ENCODE measurements at regions of chr11 and their contacts with region 1.

Region 1: DNA sequence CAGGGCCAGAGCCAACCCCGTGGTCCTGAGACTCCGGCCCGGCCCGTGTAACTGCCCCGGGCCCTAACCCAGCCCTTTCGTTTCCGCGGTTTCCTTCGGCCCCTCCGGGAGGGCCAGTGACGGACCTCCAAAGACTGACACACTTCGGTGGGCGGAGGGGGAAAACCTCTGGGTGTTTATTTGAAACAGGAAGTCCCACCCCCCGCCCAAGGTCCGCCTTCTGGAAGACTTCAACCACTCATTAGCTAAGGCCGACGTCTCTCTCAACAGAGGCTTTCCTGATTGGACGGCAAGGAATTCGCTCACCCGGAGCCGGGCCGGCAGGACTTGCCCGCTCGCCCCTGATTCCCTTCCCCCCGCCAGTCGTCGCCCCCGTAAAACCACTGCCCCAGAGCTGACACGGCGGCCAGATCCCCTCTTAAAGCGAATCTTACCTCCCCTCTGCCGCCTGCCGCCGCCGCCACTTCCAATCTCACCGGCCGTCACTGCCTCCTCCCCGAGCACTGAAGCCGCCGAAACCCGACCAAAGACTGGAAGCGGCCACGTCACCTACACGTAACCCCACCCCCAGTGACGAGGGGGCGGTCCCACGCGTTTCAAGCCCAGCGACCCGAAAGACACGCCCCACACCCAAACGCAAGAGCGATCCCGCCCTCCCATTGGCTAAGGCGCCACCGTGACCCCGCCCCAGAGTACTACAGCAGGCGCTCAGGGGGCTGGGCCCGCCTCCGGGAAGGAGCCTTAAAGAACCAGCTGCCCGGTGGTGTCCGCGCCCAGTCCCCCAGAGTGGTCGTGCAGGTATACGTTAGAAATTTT is at the start of gene STX5:
- DNase-seq: peak; percentile 98
- CTCF ChIP-seq: no peak

Region 2: DNA sequence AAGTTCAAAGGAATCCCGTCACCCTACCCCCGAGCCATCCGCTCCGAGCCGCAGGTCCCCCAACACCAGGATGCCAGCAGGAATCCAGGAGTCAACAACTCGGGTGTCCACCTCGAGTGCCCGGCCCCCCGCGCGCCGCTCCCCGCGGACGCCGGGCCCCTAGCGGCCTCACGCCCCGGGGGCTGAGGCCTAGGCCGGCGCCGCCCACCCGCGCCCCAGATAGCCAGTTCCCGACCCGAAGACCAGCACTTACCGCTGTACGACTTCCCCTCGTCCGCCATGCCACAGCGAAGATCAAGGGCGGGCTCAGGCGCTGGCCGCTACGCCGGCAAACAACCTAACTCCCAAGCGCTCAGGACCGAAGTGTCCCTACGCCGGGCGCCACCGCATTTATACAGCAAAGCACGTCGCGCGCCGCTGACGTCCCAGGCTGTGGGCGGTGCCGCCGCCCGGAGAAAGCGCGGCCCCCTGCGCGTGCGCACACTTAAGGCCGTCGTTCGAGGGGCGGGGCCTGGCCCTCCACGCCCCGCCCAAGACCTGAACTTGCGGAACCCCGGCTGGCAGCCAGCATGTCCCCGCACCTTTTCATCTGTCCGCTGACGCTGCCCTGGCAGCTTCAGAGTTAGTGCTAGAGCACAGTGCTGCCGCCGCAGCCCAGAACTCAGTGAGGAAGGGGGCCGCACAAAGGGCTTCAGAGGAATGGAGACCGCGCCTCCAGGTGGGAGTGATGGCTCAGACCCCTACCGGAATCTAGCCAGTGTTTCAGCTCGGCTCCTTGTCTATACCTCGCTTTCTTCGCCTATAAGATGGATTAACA is 26.4 kb before region 1 on chr11 and contains the start of gene NXF1:
- CTCF ChIA-PET with region 1: interaction called, 6 read pairs
- POLR2A ChIA-PET with region 1: interaction called, 14 read pairs
- DNase-seq: peak; percentile 100
- CTCF ChIP-seq: no peak

Region 3: DNA sequence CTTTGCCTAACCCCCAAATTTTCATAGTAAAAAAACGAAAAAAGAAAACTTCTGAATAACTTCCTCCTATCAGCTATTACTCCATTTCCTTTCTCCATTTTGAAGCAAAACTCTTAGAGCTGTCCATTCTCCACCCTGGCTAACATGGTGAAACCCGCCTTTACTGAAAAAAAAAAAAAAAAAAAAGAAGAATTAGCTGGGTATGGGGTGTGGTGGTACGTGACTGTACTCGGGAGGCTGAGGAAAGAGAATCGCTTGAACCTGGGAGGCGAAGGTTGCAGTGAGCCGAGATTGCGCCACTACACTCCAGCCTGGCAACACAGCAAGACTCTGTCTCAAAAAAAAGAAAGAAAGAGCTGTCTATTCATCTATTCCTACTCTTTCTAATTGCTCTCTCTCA is 15.2 kb before region 1 on chr11:
- CTCF ChIA-PET with region 1: interaction called, 10 read pairs
- POLR2A ChIA-PET with region 1: interaction called, 6 read pairs
- DNase-seq: no peak
- CTCF ChIP-seq: no peak

Region 4: GRCh38 chr11:62958547-62959421 is 127.1 kb after region 1 on chr11:
- CTCF ChIA-PET with region 1: no interaction called
- POLR2A ChIA-PET with region 1: no interaction called
- DNase-seq: no peak
- CTCF ChIP-seq: no peak

Region 5: GRCh38 chr11:62974848-62975522 is 143.3 kb after region 1 on chr11:
- CTCF ChIA-PET with region 1: no interaction called
- POLR2A ChIA-PET with region 1: no interaction called
- DNase-seq: no peak
- CTCF ChIP-seq: peak; percentile 15

Measured in GM10248 (cell line).